MCF 10A (cell line): ENCODE measurements at regions of chr1 and their contacts with region 1.

Region 1: DNA sequence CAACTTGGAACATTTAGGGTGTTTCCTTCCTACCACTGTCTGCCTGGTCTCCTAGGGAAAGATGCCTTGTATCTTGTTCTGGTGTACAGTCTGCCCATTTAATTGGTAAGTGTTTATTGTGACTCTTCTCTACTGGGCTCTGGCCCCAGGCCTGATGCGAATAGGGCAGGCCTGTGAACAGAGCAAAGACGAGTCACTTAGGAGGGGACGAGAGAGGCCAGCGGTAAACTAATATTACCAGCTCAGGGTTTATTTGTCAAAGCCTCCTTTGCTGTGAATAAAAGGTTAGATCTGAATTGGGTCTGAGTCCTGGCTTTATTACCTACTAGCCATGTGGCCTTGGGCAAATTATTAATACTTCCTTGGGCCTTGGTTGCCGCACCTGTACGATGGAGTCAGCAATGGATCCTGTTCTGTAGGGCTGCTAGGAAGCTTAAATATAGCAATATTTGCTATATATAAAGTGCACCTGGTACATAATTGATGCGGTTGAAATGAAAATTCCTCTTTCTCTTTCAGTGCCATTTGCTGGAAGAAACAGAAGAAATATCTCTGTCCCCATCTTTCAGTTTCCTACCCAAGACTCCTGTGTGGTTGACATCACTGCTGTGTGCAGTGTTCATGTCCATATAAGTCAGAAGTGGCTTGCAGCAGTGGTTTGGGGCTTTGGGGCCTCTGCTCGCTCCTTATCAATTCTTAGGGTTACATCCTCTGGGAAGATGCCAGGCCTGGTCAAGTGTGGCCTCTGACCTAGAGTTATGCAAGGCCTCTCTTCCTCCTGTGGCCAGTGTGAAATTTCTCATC is 32.4 kb downstream of the MAPKAPK2 start:
- DNase-seq: no peak
- H3K4me3 Mint-ChIP-seq: no peak overlapping the region
- H3K27ac Mint-ChIP-seq: peak overlapping the region; percentile 9
- H3K4me1 Mint-ChIP-seq: peaks cover 58% of the 10 kb centered on the region
- H3K27me3 Mint-ChIP-seq: no peaks in the 10 kb centered on the region
- CTCF ChIP-seq: no peak

Region 2: DNA sequence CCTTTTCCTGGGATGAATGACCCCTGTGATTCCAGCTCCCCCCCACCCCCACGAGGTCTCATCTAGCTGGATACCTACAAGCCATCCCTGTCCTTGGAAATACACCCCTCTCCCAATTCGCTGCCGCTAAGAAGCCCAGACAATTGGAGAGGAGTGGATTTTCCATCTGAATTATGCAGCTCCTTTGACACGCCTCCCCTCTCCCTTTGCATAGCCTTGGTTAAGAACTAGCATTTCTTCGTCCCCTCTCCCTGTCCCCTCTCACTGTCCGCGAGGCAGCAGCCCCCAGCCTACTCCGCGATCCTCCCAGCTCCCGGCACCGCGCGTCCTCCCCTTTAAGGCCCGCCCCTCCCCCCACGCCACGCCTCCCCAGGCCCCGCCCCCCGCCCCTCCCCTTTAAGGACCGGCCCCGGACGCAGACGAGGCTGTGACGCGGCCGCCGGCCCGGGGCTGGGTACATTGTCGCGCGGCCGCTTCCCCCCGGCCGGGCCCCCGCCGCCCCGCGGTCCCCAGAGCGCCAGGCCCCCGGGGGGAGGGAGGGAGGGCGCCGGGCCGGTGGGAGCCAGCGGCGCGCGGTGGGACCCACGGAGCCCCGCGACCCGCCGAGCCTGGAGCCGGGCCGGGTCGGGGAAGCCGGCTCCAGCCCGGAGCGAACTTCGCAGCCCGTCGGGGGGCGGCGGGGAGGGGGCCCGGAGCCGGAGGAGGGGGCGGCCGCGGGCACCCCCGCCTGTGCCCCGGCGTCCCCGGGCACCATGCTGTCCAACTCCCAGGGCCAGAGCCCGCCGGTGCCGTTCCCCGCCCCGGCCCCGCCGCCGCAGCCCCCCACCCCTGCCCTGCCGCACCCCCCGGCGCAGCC is 32.4 kb before region 1 on chr1 and contains the start of gene MAPKAPK2:
- CTCF ChIA-PET with region 1: interaction called, 18 read pairs
- POLR2A ChIA-PET with region 1: interaction called, 229 read pairs
- intact Hi-C with region 1: no loop called
- DNase-seq: peak; percentile 83
- H3K4me3 Mint-ChIP-seq: peak within 1 kb of the TSS; percentile 93
- H3K27ac Mint-ChIP-seq: peak within 1 kb of the TSS; percentile 97
- H3K4me1 Mint-ChIP-seq: peaks cover 46% of the 10 kb centered on the region
- H3K27me3 Mint-ChIP-seq: no peaks in the 10 kb centered on the region
- CTCF ChIP-seq: no peak
- total RNA-seq, gene MAPKAPK2: 142 and 178 TPM in 2 replicates

Region 3: DNA sequence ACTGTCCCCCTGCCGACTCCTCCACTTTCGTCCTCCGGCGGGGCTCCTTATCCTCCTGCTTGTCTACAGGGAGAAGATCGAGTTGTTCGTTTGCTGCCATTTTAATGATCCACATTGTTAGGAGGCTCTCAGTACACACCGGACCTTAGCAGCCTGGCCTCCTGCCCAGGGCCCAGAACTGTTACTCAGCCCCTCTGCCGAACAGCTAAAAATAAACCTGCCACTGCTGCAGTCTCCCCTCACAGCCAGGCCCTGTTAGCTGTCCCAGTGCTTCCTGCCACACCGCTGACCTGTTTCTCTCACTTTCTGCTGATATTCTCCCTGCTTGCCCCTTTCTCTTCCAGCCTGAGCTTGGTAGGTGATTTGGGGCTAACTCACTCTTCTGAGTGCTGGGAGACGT is 24.0 kb before region 1 on chr1:
- CTCF ChIA-PET with region 1: interaction called, 18 read pairs
- POLR2A ChIA-PET with region 1: interaction called, 229 read pairs
- intact Hi-C with region 1: no loop called
- DNase-seq: no peak
- H3K4me3 Mint-ChIP-seq: no peak overlapping the region
- H3K27ac Mint-ChIP-seq: no peak overlapping the region
- H3K4me1 Mint-ChIP-seq: peaks cover 56% of the 10 kb centered on the region
- H3K27me3 Mint-ChIP-seq: no peaks in the 10 kb centered on the region
- CTCF ChIP-seq: no peak

Region 4: DNA sequence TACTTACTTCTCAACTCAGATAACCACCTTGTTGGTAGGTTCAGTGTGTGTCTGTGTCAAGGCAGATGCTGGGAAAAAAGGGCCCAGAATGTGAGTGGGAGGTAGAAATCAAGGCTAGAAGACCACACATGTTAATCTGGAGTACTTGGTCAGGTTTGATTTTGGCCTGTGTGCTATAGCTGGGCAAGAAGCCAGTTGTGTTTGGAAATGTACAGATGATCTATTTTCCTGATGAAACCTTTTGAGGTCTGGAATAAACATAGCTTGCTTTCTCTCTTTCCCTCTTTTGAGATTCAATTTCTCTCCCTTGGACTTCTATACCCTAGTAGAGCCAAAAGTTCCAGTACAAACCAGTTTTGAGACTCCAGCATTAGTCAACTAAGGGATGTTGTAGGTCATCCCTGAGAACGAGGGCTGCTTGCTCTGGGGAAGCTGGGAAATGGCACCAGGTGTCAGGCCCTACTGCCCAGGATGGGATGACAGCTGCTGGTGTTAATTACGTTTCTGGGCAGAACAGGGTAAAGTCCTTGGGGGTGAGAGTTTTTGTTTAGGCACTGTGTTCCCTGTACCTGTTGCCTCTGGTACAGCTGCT is 16.5 kb before region 1 on chr1:
- CTCF ChIA-PET with region 1: interaction called, 9 read pairs
- POLR2A ChIA-PET with region 1: interaction called, 52 read pairs
- intact Hi-C with region 1: no loop called
- DNase-seq: peak; percentile 81
- H3K4me3 Mint-ChIP-seq: no peak overlapping the region
- H3K27ac Mint-ChIP-seq: peak overlapping the region; percentile 80
- H3K4me1 Mint-ChIP-seq: peaks cover 57% of the 10 kb centered on the region
- H3K27me3 Mint-ChIP-seq: no peaks in the 10 kb centered on the region
- CTCF ChIP-seq: no peak

Region 5: DNA sequence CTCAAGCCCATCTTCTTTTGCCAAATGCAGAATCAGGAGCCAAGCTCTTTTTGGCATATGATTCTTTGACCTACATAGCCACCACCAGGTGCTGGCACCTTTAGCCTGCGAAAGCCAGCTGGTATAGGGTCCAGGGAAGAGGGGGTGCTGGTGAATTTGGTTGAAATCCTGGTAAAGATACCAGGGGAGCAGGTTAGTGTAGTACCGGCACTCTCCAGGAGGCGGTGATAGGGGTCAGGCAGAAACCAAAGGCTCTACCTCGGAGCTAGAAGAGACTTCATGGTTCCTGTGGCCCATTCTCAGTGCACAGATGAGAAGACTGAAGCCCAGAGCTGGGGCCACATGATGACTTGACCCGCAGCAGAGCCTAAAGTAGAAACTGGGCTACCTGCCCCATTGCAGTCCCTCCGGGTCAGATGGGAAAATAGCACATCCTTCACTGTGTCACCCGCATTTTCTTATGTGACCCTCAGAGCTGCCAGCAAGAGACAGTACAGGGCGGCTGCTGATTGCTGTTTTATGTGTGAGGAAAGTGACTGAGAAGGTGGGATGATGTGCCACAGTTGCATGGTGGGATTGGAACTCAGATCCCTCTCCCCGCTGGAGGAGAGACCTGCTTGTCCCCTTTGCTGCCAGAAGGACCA is 17.5 kb after region 1 on chr1:
- CTCF ChIA-PET with region 1: interaction called, 18 read pairs
- POLR2A ChIA-PET with region 1: interaction called, 3 read pairs
- intact Hi-C with region 1: no loop called
- DNase-seq: peak; percentile 73
- H3K4me3 Mint-ChIP-seq: no peak overlapping the region
- H3K27ac Mint-ChIP-seq: peak overlapping the region; percentile 6
- H3K4me1 Mint-ChIP-seq: peaks cover 9% of the 10 kb centered on the region
- H3K27me3 Mint-ChIP-seq: no peaks in the 10 kb centered on the region
- CTCF ChIP-seq: peak; percentile 97